Mammary epithelial cell (primary cell): ENCODE measurements at regions of chr6 and their contacts with region 1.

Region 1: GRCh38 chr6:134822920-134823709 is 126.8 kb downstream of the ALDH8A1 start:
- DNase-seq: peak; percentile 72
- H3K4me3 ChIP-seq: no peak overlapping the region
- H3K27ac ChIP-seq: no peak overlapping the region
- H3K4me1 ChIP-seq: peaks cover 7% of the 10 kb centered on the region
- H3K27me3 ChIP-seq: no peaks in the 10 kb centered on the region
- CTCF ChIP-seq: peak; percentile 94 to 95

Region 2: DNA sequence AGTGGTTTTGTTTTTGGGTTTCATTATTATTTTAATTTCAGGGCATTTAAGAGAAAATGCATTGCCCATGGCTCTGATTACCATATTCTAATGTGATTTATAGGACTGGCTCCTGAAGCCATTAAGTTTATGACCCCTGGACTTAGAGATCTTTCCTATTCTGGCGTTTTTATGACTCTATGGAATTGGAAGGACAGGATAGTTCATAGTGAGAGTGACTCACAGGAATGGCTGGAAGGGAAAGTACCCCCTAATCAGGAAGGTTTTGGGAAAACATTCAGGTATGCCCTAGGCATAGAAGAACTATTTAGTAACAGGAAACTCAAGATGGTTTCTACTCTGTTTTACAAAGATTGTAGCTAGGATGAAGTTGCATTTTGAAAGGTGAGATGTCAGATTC is 662.1 kb before region 1 on chr6:
- CTCF ChIA-PET with region 1: interaction called, 4 read pairs
- dilution Hi-C with region 1: loop called (anchors 5 kb)
- in situ Hi-C with region 1: loop called in 1 of 2 experiments (anchors 5 kb)
- intact Hi-C with region 1: loop called (anchors 1 kb)
- DNase-seq: peak; percentile 74
- H3K4me3 ChIP-seq: no peak overlapping the region
- H3K27ac ChIP-seq: no peak overlapping the region
- H3K4me1 ChIP-seq: peaks cover 7% of the 10 kb centered on the region
- H3K27me3 ChIP-seq: no peaks in the 10 kb centered on the region
- CTCF ChIP-seq: no peak

Region 3: DNA sequence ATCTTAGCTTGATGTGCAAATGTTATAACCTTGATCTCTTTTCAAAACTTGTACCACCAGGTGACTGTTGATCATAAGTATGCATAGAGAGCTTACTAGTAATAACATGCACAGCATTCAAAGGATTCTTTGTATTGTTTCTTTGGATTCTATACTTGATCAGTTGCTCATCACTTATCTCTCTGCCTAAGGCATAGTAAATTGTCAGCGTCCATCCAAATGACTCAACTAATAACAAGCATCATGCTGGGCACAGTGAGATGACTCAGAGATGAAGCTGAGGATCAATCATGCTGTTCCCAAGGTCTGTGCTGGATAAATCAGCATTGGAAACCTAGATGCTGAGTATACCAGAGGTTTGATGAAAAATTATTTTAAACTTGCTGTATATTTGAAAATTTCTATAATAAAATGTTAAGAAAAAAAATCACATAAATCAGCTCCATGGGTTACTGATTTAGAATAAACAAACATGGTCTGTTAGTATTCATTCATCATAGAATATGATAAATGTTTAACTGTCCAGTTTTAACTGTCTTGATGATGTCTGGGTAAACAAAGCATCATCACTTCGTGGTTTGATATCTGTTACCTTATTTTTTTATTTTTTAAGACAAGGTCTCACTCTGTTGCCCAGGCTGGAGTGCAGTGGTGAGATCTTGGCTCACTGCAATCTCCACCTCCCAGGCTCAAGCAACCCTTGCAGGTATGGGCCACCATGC is 459.6 kb before region 1 on chr6:
- CTCF ChIA-PET with region 1: no interaction called
- dilution Hi-C with region 1: no loop called
- in situ Hi-C with region 1: no loop called
- intact Hi-C with region 1: loop called (anchors 1 kb)
- DNase-seq: peak; percentile 98
- H3K4me3 ChIP-seq: no peak overlapping the region
- H3K27ac ChIP-seq: peak overlapping the region; percentile 88
- H3K4me1 ChIP-seq: peaks cover 24% of the 10 kb centered on the region
- H3K27me3 ChIP-seq: no peaks in the 10 kb centered on the region
- CTCF ChIP-seq: no peak

Region 4: GRCh38 chr6:134640975-134641429 is 182.1 kb before region 1 on chr6:
- CTCF ChIA-PET with region 1: no interaction called
- dilution Hi-C with region 1: loop called (anchors 5 kb)
- in situ Hi-C with region 1: loop called in 1 of 2 experiments (anchors 5 kb)
- intact Hi-C with region 1: loop called (anchors 1 kb)
- DNase-seq: peak; percentile 94
- H3K4me3 ChIP-seq: no peak overlapping the region
- H3K27ac ChIP-seq: peak overlapping the region; percentile 65
- H3K4me1 ChIP-seq: peaks cover 19% of the 10 kb centered on the region
- H3K27me3 ChIP-seq: no peaks in the 10 kb centered on the region
- CTCF ChIP-seq: peak; percentile 94 to 99

Region 5: GRCh38 chr6:134908906-134909516 is 85.9 kb after region 1 on chr6:
- CTCF ChIA-PET with region 1: no interaction called
- dilution Hi-C with region 1: no loop called
- in situ Hi-C with region 1: no loop called
- intact Hi-C with region 1: loop called (anchors 1 kb)
- DNase-seq: peak; percentile 100
- H3K4me3 ChIP-seq: no peak overlapping the region
- H3K27ac ChIP-seq: peak overlapping the region; percentile 99
- H3K4me1 ChIP-seq: peaks cover 41% of the 10 kb centered on the region
- H3K27me3 ChIP-seq: no peaks in the 10 kb centered on the region
- CTCF ChIP-seq: no peak